Astrocyte of the cerebellum (primary cell): ENCODE measurements at regions of chr22 and their contacts with region 1.

Region 1: DNA sequence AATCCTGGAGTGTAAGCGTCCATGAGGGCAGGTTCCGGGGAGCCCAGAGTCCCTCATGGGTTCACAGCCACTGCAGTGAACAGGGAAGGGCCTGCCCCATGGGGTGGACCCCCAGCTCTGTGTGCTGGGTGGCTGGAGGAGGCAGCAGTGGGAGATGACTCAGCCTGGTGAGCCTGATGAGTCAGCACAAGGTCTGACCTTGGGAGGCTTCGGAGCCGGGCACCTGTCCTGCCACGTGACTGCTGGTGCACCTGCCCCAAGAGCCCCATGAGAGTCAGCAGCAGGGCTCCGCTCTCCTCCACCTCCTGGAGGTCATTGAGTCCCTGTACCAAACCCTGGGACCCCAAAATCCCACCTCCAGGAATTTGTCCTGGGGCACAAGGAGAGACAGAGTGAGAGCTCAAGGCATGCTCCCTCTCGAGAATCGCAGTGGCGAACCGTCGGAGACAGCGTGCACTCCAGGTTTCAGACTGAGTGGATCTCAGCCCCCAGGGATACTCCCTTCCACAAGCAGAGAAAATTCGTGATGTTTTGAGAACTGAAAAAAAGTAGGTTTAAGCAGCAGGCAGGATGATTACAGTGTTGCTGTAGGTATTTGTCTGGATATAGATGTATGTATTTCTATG is 1221.7 kb downstream of the BRD1 start:
- DNase-seq: no peak
- H3K4me3 ChIP-seq: no peak overlapping the region
- CTCF ChIP-seq: no peak

Region 2: DNA sequence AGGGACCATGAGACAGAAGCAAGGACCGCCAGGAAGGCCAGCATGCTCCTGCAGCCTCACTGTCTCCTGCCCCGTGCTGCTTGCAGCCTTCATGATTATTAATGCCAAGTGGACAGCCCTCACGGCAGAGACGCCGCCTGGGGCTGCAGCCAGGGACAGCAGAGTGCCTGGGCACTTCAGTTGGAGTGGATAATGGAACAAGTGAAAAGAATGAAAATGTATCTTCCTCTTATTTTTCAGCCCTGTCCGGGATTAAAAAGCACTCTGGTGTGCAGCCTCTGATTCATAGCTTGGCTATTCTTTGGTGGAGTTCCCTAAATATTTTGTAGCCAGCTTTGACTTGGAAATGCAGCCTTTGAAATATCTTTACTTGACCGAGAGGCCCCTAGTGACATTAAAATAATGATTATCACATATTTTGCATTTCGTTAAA is 182.5 kb before region 1 on chr22:
- in situ Hi-C with region 1: no loop called
- DNase-seq: no peak
- H3K4me3 ChIP-seq: no peak overlapping the region
- CTCF ChIP-seq: no peak

Region 3: DNA sequence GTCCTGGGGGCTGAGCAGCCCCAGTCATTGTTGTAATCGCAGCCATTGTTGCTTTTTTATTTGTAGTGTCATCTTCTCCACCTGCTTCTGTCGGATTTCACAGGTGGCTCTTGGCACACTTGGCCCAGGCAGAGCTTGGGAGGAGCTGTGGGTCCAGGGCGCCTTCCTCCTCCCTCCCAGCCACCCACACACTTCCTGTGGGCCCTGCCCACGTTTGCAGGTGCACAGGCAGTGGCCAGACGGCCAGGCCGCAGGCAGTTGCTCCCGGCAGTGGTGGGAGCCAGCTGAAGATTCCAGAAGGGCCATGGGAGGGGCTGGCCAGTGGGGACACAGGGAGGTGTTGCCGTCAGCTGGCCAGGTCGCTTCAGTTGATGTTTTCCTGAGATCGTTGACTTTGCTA is 29.8 kb after region 1 on chr22:
- in situ Hi-C with region 1: no loop called
- DNase-seq: no peak
- H3K4me3 ChIP-seq: no peak overlapping the region
- CTCF ChIP-seq: no peak

Region 4: GRCh38 chr22:48647606-48648515 is 41.9 kb after region 1 on chr22:
- in situ Hi-C with region 1: loop called (anchors 5 kb)
- DNase-seq: no peak
- H3K4me3 ChIP-seq: no peak overlapping the region
- CTCF ChIP-seq: no peak